Tibial artery (tissue), 4 donors: ENCODE measurements at regions of chr5 and their contacts with region 1.

Region 1: DNA sequence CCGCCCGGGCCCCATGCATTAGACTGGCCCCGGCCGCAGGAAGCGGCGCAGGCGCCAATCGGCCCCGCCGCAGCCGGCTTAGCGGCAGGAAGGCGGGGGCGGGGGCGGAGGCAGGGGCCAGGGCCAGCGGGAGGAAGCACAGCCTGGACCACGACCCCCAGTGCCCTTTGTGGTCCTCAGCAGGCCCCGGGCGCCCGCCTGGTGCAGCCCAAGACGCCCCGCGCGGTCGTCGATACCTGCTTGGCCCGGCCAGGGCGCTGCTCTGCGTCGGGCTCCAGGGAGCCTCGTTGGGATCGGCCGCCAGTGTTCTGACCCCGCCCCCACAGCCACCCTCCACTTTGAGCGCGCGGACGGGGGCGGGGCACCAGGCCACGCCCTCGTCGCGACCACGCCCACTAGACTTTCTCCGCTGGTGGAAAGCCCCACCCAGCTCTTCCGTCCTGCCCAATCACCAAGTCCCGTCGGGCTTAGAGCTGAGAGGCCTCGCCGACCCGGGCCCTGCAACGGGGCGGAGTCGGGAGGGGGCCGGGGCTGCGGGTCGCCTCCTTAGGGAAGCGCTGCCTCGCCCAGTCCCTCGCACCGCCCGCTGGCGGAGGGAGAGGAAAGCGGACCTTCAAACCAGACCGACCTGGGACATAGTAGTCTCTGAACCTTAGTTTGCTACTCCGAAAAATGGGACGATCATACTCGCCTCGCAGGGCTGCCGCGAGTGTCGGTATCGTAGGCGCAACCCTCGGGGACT is at the start of gene PDLIM7:
- DNase-seq: peak; percentile 96 to 99
- H3K4me3 ChIP-seq: peak within 1 kb of the TSS; percentile 83 to 100
- H3K27ac ChIP-seq: peak within 1 kb of the TSS; percentile 92 to 100
- H3K4me1 ChIP-seq: peaks cover 7 to 58% (median 50%) of the 10 kb centered on the region in 4 donors
- H3K27me3 ChIP-seq: no peaks in the 10 kb centered on the region
- CTCF ChIP-seq: peak in 1 of 2 experiments; percentile 1

Region 2: DNA sequence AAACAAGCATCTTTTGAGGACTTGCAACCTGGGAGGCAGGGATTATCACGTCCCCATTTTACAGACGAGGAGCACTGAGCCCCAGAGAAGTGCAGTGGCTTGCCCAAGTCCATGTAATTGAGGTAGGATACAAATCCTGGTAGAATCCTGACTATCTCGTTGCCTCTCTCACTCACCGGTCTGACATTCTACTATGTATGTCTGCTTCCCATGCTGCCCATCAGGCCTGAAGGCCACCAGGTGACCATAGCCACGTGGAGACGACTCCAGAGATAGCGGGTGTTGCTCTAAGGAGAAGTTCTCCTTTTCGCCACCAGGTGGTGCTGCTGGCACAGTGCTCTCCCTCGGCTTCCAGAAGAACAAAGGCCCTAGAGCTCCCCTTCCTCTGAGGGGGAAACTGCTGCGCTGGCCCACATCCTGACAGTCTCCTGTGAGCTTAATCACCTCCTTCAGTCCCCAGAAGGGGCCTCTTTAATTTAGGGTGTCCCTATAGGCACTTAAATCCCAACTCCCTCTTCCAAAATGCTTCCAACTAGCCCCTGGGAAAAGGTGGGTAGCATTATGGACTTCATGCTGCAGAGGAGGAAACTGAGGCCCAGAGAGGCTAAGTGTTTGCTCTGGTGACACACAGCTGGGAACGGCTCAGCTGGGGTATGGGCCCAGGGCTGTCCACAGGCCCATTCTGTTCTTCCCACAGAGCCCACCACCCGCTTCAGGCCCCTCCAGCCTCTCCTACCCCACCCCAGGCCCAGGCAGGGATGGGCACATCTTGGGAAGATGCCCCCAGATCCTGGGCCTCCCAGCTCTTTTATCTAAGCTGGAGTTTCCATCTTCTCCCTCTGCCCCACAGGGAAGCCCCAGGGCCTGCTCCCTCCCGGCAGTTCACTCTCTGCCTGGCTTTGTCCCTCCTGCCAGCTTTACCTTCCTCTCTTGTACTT is 106.8 kb before region 1 on chr5:
- intact Hi-C with region 1: loop called (anchors 5 kb)
- DNase-seq: peak; percentile 72 to 86
- H3K4me3 ChIP-seq: no peak overlapping the region
- H3K27ac ChIP-seq: no peak overlapping the region
- H3K4me1 ChIP-seq: peaks cover 0 to 6% (median 0%) of the 10 kb centered on the region in 4 donors
- H3K27me3 ChIP-seq: peaks cover 0 to 40% of the 10 kb centered on the region in 2 donors
- CTCF ChIP-seq: peak; percentile 95 to 99

Region 3: DNA sequence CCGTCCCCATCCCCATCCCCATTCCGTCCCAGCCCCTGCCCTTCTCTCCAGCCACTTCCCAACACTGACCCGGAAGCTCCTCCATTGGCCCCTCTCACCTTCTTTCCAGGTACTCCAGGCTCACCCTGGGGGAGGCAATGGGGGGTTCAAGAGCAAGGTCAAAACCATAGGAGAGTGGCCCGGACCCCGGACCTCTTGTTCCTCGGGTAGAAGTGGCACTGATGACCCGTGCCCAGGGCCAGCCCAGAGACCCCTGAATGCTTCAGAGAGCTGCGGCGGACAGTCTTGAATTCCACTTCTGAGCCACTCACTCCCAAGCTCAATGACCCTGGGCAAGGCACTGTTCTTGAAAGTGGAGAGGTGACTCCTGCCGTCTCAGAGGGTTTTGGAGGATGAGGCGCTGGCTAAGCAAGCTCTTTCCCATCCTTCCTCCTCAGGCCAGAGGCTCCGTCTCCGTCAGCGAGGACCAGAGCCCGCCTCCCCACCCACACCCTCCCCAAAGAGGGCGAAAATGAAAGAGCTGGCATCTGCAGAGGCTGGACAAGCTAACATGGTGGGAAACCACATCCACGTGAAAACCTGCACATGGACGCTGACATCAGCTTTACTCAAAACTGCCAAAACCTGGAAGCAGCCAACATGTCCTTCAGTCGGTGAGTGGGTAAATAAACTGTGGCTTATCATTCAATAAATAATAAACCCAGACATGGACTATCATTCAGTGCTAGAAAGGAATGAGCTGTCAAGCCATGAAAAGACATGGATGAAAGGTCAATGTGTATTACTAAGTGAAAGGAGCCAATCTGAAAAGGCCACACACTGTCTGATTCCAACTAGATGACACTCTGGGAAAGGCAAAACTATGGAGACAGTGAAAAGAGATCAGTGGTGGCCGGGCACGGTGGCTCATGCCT is 762.4 kb after region 1 on chr5:
- intact Hi-C with region 1: no loop called
- DNase-seq: no peak
- H3K4me3 ChIP-seq: no peak overlapping the region
- H3K27ac ChIP-seq: no peak overlapping the region
- H3K4me1 ChIP-seq: no peaks in the 10 kb centered on the region
- H3K27me3 ChIP-seq: peaks cover 0 to 16% of the 10 kb centered on the region in 2 donors
- CTCF ChIP-seq: no peak